Activated CD4-positive, alpha-beta memory T cell treated with anti-CD3 and anti-CD28 coated beads for 36 hours (primary cell): ENCODE measurements at regions of chr10 and their contacts with region 1.

Region 1: GRCh38 chr10:14195433-14195832 is 135.3 kb downstream of the FRMD4A start:
- DNase-seq: no peak
- H3K4me3 Mint-ChIP-seq: no peak overlapping the region
- H3K27ac Mint-ChIP-seq: no peak overlapping the region
- H3K4me1 Mint-ChIP-seq: no peaks in the 10 kb centered on the region
- H3K27me3 Mint-ChIP-seq: peaks cover 38% of the 10 kb centered on the region

Region 2: GRCh38 chr10:13608246-13608853 is 587.1 kb before region 1 on chr10:
- CTCF ChIA-PET with region 1: no interaction called
- POLR2A ChIA-PET with region 1: no interaction called
- intact Hi-C with region 1: no loop called
- DNase-seq: no peak
- H3K4me3 Mint-ChIP-seq: no peak overlapping the region
- H3K27ac Mint-ChIP-seq: no peak overlapping the region
- H3K4me1 Mint-ChIP-seq: no peaks in the 10 kb centered on the region
- H3K27me3 Mint-ChIP-seq: no peaks in the 10 kb centered on the region

Region 3: GRCh38 chr10:14478604-14479003 is 283.2 kb after region 1 on chr10:
- CTCF ChIA-PET with region 1: interaction called, 28 read pairs
- POLR2A ChIA-PET with region 1: no interaction called
- intact Hi-C with region 1: loop called (anchors 1 kb)
- DNase-seq: peak; percentile 36
- H3K4me3 Mint-ChIP-seq: no peak overlapping the region
- H3K27ac Mint-ChIP-seq: no peak overlapping the region
- H3K4me1 Mint-ChIP-seq: no peaks in the 10 kb centered on the region
- H3K27me3 Mint-ChIP-seq: peaks cover 6% of the 10 kb centered on the region